ENCODE measurements at regions of chrX and their contacts with region 1.

Region 1: DNA sequence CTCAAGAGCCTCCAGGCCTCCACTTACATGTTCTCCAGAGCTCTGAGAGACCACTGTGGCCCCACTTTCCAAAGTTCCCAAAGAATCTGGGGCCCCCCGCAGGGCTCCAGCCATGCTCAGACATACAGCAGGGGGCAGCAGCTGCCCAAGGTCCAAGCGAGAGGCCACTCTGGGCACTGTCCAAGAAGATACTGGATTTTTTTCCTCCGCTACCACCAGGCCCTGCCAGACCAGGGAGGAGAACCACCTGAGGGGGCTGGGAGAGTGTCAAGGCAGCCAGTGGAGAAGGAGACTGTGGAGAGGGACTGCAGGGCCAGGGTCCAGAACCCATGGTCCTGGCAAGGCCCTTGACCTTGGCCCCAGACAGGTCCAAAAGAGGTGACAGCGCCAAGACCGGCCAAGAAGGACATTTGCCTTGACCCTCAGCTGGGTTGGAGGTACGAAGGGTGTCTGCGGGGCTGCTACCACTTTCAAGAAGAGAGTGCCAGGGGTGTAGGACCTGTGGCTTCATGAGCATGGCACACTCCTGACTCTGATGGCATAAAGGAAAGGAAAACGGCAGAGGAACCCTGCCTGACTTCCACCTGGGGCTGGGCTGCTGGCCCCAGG is 5.3 kb downstream of the EMD start:
- DNase-seq: peak; percentile 17 to 45
- H3K4me3 ChIP-seq: no peak overlapping the region
- H3K27ac ChIP-seq: no peak overlapping the region
- H3K4me1 ChIP-seq: peaks cover 0 to 10% of the 10 kb centered on the region in 2 donors
- H3K27me3 ChIP-seq: no peaks in the 10 kb centered on the region
- CTCF ChIP-seq: peak in 3 of 6 experiments; percentile 40 to 44 (median 42)
- POLR2A ChIP-seq: no peak

Region 2: GRCh38 chrX:154333837-154334271 is 50.5 kb before region 1 on chrX:
- intact Hi-C with region 1: loop called (anchors 5 kb)
- DNase-seq: no peak
- H3K4me3 ChIP-seq: no peak overlapping the region
- H3K27ac ChIP-seq: no peak overlapping the region
- H3K4me1 ChIP-seq: no peaks in the 10 kb centered on the region
- H3K27me3 ChIP-seq: no peaks in the 10 kb centered on the region
- CTCF ChIP-seq: no peak
- POLR2A ChIP-seq: no peak